Activated CD4-positive, alpha-beta T cell treated with anti-CD3 and anti-CD28 coated beads, Interleukin-2, amount 10 ng/mL, durations not matched to agents 24 days and 14 days (primary cell): ENCODE measurements at regions of chr12 and their contacts with region 1.

Region 1: GRCh38 chr12:116924558-116925453 is 14.1 kb downstream of the FBXW8 start:
- DNase-seq: peak; percentile 91
- H3K4me3 Mint-ChIP-seq: peak overlapping the region; percentile 76
- H3K27ac Mint-ChIP-seq: peak overlapping the region; percentile 76
- H3K4me1 Mint-ChIP-seq: peaks cover 65% of the 10 kb centered on the region
- H3K27me3 Mint-ChIP-seq: peaks cover 10% of the 10 kb centered on the region

Region 2: DNA sequence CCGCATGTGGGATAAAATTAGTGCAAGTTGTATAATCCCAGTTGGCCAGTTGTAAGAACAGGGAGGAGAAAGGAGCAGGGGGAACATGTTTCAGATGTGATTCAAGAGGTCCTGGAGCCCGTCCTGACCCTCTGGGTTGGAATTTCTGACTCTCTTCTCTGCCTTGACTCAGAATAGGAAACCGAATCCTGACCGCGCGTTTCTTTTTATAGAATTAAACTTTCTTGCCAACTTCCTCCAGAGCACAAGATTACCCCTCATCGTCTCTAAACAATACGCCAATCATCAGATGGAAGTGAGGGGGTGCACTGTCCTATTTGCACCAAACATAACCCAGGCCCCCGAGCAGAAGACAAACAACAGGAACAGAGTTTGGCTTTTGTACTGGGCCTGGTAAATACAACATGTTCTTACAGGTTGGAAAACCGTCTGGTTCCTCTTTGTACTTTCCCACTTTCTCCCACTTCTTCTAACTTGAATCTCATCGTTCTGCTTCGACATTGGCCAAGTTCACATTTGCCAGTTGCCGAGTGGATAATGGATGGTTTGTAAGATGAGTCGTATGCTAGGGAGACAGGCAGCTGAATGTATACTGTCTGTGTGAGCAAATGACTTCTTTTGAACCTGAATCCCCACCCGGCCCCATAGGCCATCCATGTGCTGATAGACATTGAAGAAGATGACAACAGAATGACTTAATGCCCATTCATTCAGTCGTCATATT is 604.7 kb before region 1 on chr12:
- intact Hi-C with region 1: loop called (anchors 10 kb)
- DNase-seq: peak; percentile 74
- H3K4me3 Mint-ChIP-seq: peak overlapping the region; percentile 73
- H3K27ac Mint-ChIP-seq: peak overlapping the region; percentile 85
- H3K4me1 Mint-ChIP-seq: peaks cover 46% of the 10 kb centered on the region
- H3K27me3 Mint-ChIP-seq: peaks cover 1% of the 10 kb centered on the region

Region 3: DNA sequence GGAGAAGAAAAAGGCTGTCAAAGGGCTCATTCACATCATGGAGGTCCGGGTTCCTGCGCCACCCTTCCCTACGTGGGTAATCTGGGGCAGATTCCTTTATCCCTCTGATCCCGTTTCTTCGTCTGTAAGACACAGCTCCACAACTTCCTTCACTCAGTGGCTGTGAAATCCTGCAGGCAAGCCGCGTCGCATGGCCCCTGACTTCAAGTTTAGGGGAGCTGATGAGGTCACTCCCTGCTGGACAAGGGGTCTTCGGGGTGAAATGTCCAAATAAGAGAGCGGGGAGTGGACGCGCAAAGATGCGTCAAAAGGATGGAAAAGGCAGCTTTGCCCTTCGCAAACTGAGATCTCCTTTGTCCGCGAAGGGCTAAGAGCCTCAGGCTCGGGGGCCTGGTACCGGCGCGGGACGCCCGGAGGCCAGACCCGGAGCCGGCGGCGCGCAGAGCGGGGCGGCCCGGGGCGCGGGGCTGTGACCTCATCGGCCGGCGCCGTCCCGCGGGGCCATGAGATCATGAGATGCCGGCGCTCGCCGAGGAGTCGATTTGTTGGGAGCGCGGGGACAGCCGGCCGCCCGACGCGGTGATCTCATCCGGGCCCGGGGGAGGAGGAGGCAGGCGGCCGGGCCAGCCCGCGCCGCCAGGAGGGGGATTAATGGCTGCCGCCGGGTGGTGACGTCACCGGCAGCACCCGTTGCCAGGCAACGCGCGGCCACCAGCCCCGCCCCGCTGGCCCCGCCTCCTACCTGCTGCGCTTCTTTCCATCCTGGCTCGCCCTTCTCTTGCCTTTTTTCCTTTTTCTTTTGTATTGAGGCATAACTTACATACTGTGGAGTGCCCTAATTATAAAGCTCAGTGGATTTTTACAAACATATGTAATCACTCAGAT is 105.6 kb before region 1 on chr12:
- intact Hi-C with region 1: loop called (anchors 2 kb)
- DNase-seq: peak; percentile 97
- H3K4me3 Mint-ChIP-seq: peak overlapping the region; percentile 96
- H3K27ac Mint-ChIP-seq: peak overlapping the region; percentile 98
- H3K4me1 Mint-ChIP-seq: peaks cover 22% of the 10 kb centered on the region
- H3K27me3 Mint-ChIP-seq: peaks cover 12% of the 10 kb centered on the region

Region 4: DNA sequence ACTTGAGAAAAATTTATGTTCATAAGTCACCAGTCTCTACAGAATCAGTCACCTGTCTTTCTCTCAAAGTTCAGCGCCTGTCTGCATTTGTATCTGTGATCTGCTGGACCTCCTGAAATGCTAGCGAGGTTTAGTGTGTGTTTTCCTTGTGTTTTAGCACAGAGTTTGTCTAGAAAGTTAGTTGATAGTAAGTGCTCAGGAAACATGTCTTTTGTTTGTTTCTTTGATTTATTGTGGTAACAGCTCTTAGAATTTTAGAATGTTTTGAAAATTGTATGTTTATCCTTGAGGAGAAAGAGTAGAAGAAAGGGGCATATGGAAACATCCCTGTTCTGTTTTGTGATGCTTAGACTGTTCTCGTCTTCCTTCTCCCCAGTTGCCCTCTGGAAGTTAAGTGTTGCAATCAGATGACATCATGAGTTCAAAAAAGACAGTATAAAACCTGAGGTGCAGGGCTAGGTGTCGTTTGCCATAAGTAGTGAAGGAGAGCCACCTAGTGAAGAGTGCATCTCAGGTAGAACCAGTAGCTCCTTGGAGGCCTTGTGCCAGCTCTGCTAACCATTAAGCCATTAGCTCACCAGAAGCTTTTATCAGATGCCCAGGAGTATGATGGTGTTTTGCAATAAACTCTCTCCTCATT is 30.7 kb after region 1 on chr12:
- intact Hi-C with region 1: loop called (anchors 1 kb)
- DNase-seq: peak; percentile 70
- H3K4me3 Mint-ChIP-seq: no peak overlapping the region
- H3K27ac Mint-ChIP-seq: no peak overlapping the region
- H3K4me1 Mint-ChIP-seq: peaks cover 19% of the 10 kb centered on the region
- H3K27me3 Mint-ChIP-seq: no peaks in the 10 kb centered on the region

Region 5: GRCh38 chr12:117134059-117134458 is 209.3 kb after region 1 on chr12:
- intact Hi-C with region 1: loop called (anchors 10 kb)
- DNase-seq: peak; percentile 86
- H3K4me3 Mint-ChIP-seq: peak overlapping the region; percentile 44
- H3K27ac Mint-ChIP-seq: peak overlapping the region; percentile 76
- H3K4me1 Mint-ChIP-seq: peaks cover 18% of the 10 kb centered on the region
- H3K27me3 Mint-ChIP-seq: no peaks in the 10 kb centered on the region